Calu3 (cell line): ENCODE measurements at regions of chr1 and their contacts with region 1.

Region 1: GRCh38 chr1:152189657-152190442 is 30.8 kb upstream of the RPTN start:
- DNase-seq: peak; percentile 77
- H3K4me3 Mint-ChIP-seq: peak overlapping the region; percentile 71
- H3K27ac Mint-ChIP-seq: no peak overlapping the region
- H3K4me1 Mint-ChIP-seq: peaks cover 27% of the 10 kb centered on the region
- H3K27me3 Mint-ChIP-seq: peaks cover 61% of the 10 kb centered on the region
- CTCF ChIP-seq: peak; percentile 71

Region 2: DNA sequence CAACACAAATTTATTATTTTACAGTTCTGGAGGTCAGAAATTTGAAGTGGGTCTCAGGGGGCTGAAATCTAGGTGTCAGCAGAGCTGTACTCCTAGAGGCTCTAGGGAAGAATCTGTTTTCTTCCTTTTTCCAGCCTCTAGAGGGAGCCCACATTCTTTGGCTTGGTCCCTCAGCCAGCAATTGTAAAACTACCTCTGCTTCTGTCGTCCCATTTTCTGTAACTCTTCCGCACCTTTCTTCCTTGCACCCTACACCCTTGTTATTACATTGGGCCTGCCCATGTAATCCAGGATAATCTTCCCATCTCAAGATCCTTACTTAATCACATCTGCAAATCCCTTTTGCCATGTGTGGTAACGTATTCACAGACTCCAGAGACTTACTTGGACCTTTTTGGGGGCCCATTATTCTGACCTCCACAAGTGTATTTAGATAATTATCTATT is 255.8 kb before region 1 on chr1:
- CTCF ChIA-PET with region 1: no interaction called
- intact Hi-C with region 1: loop called (anchors 5 kb)
- DNase-seq: peak; percentile 76
- H3K4me3 Mint-ChIP-seq: no peak overlapping the region
- H3K27ac Mint-ChIP-seq: no peak overlapping the region
- H3K4me1 Mint-ChIP-seq: peaks cover 28% of the 10 kb centered on the region
- H3K27me3 Mint-ChIP-seq: no peaks in the 10 kb centered on the region
- CTCF ChIP-seq: peak; percentile 79

Region 3: GRCh38 chr1:152089014-152089676 is 100.7 kb before region 1 on chr1 and contains the start of gene TCHHL1:
- CTCF ChIA-PET with region 1: no interaction called
- intact Hi-C with region 1: no loop called
- DNase-seq: no peak
- H3K4me3 Mint-ChIP-seq: no peak within 1 kb of the TSS
- H3K27ac Mint-ChIP-seq: no peak within 1 kb of the TSS
- H3K4me1 Mint-ChIP-seq: no peaks in the 10 kb centered on the region
- H3K27me3 Mint-ChIP-seq: peaks cover 1% of the 10 kb centered on the region
- CTCF ChIP-seq: no peak
- total RNA-seq, gene TCHHL1: not detected in 2 replicates

Region 4: DNA sequence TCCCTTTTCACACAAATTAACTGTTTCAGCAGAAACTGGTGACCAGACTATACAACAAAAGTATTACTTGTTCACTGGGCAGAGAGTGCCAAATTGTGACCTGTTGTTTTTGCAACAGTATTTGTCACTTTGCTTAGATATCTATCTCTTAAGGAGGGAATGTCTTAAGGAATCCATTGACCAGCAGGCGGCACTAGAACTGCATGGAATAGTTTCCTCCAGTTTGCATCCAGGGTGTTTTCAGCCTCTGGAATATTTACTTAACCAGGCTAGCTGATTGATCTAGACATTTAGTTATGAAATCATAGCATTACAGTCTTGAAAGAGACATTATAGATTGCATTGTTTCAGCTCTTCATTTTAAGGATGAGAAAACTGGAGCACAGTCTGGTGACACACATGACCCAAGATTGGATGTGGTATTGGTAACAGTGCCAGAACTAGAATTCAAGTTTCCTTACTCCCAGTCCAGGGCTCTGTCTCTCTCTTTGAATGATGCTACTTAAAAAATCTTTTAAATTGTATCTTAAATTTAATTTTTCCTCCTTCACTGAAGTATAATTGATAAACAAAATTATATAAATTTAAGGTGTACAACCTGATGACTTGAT is 47.8 kb before region 1 on chr1:
- CTCF ChIA-PET with region 1: interaction called, 14 read pairs
- intact Hi-C with region 1: loop called (anchors 1 kb)
- DNase-seq: peak; percentile 69
- H3K4me3 Mint-ChIP-seq: no peak overlapping the region
- H3K27ac Mint-ChIP-seq: no peak overlapping the region
- H3K4me1 Mint-ChIP-seq: no peaks in the 10 kb centered on the region
- H3K27me3 Mint-ChIP-seq: peaks cover 78% of the 10 kb centered on the region
- CTCF ChIP-seq: peak; percentile 80

Region 5: GRCh38 chr1:152237093-152237492 is 47.2 kb after region 1 on chr1:
- CTCF ChIA-PET with region 1: no interaction called
- intact Hi-C with region 1: no loop called
- DNase-seq: no peak
- H3K4me3 Mint-ChIP-seq: no peak overlapping the region
- H3K27ac Mint-ChIP-seq: no peak overlapping the region
- H3K4me1 Mint-ChIP-seq: no peaks in the 10 kb centered on the region
- H3K27me3 Mint-ChIP-seq: peaks cover 59% of the 10 kb centered on the region
- CTCF ChIP-seq: no peak

Region 6: GRCh38 chr1:152392908-152393307 is 203.1 kb after region 1 on chr1:
- CTCF ChIA-PET with region 1: no interaction called
- intact Hi-C with region 1: loop called (anchors 5 kb)
- DNase-seq: peak; percentile 72
- H3K4me3 Mint-ChIP-seq: no peak overlapping the region
- H3K27ac Mint-ChIP-seq: peak overlapping the region; percentile 3
- H3K4me1 Mint-ChIP-seq: peaks cover 18% of the 10 kb centered on the region
- H3K27me3 Mint-ChIP-seq: peaks cover 95% of the 10 kb centered on the region
- CTCF ChIP-seq: no peak